MCF 10A (cell line): ENCODE measurements at regions of chr1 and their contacts with region 1.

Region 1: DNA sequence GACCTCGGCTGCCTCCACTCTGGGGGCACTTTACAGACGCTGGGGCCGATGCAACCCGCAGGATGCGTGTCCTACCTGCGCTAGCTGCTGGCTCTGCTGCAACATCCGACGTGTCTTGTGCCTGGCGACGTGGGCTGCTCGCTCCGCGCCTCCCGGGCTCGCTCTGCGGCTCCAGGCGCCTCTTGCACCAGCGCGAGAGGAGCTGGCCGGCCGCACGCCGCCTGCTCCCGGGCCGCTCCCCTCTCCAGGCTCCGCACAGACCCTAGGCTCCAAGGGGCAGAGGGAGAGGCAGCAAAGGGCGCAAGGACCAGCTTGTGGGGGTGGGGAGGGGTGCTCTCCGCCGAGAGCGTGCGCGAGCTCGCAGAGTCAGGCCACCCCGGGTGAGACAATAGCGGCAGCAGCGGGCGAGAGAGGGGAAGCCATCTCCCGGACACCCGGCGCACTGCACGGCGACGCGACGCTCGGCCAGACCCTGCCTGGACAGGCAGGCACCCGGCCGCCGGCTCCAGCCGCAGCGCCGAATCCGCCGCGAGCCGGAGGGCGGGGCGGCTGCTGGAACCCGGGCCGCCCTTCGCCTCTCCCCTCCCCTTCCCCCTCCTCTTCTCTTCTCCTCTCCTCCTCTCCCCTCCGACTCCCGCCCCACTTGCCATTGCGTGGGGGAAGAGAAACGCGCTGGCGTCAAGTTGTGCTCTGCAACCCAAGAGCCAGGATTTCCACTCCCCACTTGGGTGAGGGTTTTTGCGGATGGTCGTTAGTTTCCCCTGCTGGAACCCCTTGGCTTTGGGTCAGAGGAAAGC is at the start of gene PIK3C2B:
- DNase-seq: peak; percentile 92
- H3K4me3 Mint-ChIP-seq: peak within 1 kb of the TSS; percentile 86
- H3K27ac Mint-ChIP-seq: peak within 1 kb of the TSS; percentile 24
- H3K4me1 Mint-ChIP-seq: peaks cover 26% of the 10 kb centered on the region
- H3K27me3 Mint-ChIP-seq: peaks cover 41% of the 10 kb centered on the region
- CTCF ChIP-seq: peak; percentile 93
- total RNA-seq, gene PIK3C2B: 3.4 and 4.4 TPM in 2 replicates

Region 2: GRCh38 chr1:204411451-204412204 is 82.9 kb before region 1 on chr1 and contains the start of gene PPP1R15B:
- CTCF ChIA-PET with region 1: interaction called, 1,125 read pairs
- POLR2A ChIA-PET with region 1: interaction called, 182 read pairs
- intact Hi-C with region 1: loop called (anchors 1 kb)
- DNase-seq: peak; percentile 100
- H3K4me3 Mint-ChIP-seq: peak within 1 kb of the TSS; percentile 100
- H3K27ac Mint-ChIP-seq: peak within 1 kb of the TSS; percentile 100
- H3K4me1 Mint-ChIP-seq: peaks cover 18% of the 10 kb centered on the region
- H3K27me3 Mint-ChIP-seq: no peaks in the 10 kb centered on the region
- CTCF ChIP-seq: no peak
- total RNA-seq, gene PPP1R15B: 86.0 and 94.8 TPM in 2 replicates

Region 3: GRCh38 chr1:204426029-204426436 is 68.4 kb before region 1 on chr1:
- CTCF ChIA-PET with region 1: interaction called, 1,125 read pairs
- POLR2A ChIA-PET with region 1: interaction called, 253 read pairs
- intact Hi-C with region 1: loop called (anchors 1 kb)
- DNase-seq: peak; percentile 86
- H3K4me3 Mint-ChIP-seq: no peak overlapping the region
- H3K27ac Mint-ChIP-seq: peak overlapping the region; percentile 1
- H3K4me1 Mint-ChIP-seq: peaks cover 19% of the 10 kb centered on the region
- H3K27me3 Mint-ChIP-seq: no peaks in the 10 kb centered on the region
- CTCF ChIP-seq: no peak

Region 4: GRCh38 chr1:204438628-204439027 is 55.9 kb before region 1 on chr1:
- CTCF ChIA-PET with region 1: interaction called, 1,125 read pairs
- POLR2A ChIA-PET with region 1: interaction called, 253 read pairs
- intact Hi-C with region 1: loop called (anchors 2 kb)
- DNase-seq: peak; percentile 99
- H3K4me3 Mint-ChIP-seq: peak overlapping the region; percentile 6
- H3K27ac Mint-ChIP-seq: peak overlapping the region; percentile 94
- H3K4me1 Mint-ChIP-seq: peaks cover 65% of the 10 kb centered on the region
- H3K27me3 Mint-ChIP-seq: no peaks in the 10 kb centered on the region
- CTCF ChIP-seq: no peak

Region 5: GRCh38 chr1:204465546-204466415 is 28.7 kb before region 1 on chr1:
- CTCF ChIA-PET with region 1: interaction called, 10 read pairs
- POLR2A ChIA-PET with region 1: interaction called, 5 read pairs
- intact Hi-C with region 1: no loop called
- DNase-seq: no peak
- H3K4me3 Mint-ChIP-seq: no peak overlapping the region
- H3K27ac Mint-ChIP-seq: no peak overlapping the region
- H3K4me1 Mint-ChIP-seq: no peaks in the 10 kb centered on the region
- H3K27me3 Mint-ChIP-seq: no peaks in the 10 kb centered on the region
- CTCF ChIP-seq: no peak

Region 6: GRCh38 chr1:204516180-204516879 is 21.9 kb after region 1 on chr1 and contains the start of gene MDM4:
- CTCF ChIA-PET with region 1: interaction called, 6 read pairs
- POLR2A ChIA-PET with region 1: interaction called, 49 read pairs
- intact Hi-C with region 1: no loop called
- DNase-seq: peak; percentile 100
- H3K4me3 Mint-ChIP-seq: no peak within 1 kb of the TSS
- H3K27ac Mint-ChIP-seq: no peak within 1 kb of the TSS
- H3K4me1 Mint-ChIP-seq: peaks cover 12% of the 10 kb centered on the region
- H3K27me3 Mint-ChIP-seq: no peaks in the 10 kb centered on the region
- CTCF ChIP-seq: no peak
- total RNA-seq, gene MDM4: 162 and 174 TPM in 2 replicates